Endothelial cell of umbilical vein (primary cell): ENCODE measurements at regions of chr11 and their contacts with region 1.

Region 1: GRCh38 chr11:119863236-119863635 is 134.2 kb upstream of the NECTIN1 start:
- DNase-seq: no peak
- H3K4me3 ChIP-seq: no peak overlapping the region
- H3K27ac ChIP-seq: no peak overlapping the region
- H3K4me1 ChIP-seq: no peaks in the 10 kb centered on the region
- H3K27me3 ChIP-seq: no peaks in the 10 kb centered on the region
- CTCF ChIP-seq: no peak
- POLR2A ChIP-seq: no peak

Region 2: DNA sequence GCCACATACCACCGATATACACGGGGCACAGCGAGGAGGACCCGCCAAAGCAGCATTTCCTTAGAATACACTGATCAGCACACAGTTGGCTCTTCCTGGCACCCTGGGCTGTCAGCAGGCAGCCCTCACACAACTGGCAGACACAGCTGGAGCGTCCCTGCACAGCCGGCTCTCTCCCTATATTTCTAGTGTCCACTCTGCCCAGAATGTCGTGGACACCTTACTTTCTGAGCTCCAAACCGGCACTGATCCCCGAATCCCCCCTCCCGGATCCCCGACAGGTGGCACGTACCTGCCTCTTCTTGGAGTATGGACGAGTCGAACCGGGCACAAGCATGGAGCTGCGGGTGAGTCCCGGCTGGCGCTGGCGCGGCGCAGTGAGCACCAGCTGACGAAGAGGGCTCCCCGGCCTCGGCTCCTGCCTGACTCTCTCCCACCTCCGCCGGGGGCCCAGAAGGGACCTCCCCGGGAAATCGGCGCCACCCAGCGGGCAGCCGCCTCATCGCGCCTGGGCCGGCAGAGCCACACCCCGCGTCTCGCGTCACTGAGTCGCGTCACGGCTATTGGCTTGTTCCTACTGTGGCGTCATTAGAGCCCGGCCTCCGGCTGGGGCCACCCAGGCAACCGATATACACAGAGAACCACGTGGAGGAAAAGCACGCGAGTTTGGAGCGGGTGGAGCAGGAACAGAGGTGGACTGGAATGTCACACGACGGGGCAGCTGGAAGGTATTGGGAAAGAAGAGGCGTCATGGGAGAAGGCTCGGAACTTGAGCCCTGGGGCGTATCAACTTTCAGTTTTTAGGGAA is 481.9 kb before region 1 on chr11 and contains the start of gene USP2:
- CTCF ChIA-PET with region 1: no interaction called
- POLR2A ChIA-PET with region 1: no interaction called
- dilution Hi-C with region 1: no loop called
- intact Hi-C with region 1: no loop called
- DNase-seq: peak; percentile 95
- H3K4me3 ChIP-seq: peak within 1 kb of the TSS in 2 of 3 experiments; percentile 41 to 51
- H3K27ac ChIP-seq: no peak within 1 kb of the TSS
- H3K4me1 ChIP-seq: peaks cover 10% of the 10 kb centered on the region
- H3K27me3 ChIP-seq: peaks cover 7 to 14% of the 10 kb centered on the region in 2 experiments
- CTCF ChIP-seq: peak; percentile 92
- POLR2A ChIP-seq: no peak
- total RNA-seq, gene USP2: 1.1 and 1.2 TPM in 2 replicates

Region 3: DNA sequence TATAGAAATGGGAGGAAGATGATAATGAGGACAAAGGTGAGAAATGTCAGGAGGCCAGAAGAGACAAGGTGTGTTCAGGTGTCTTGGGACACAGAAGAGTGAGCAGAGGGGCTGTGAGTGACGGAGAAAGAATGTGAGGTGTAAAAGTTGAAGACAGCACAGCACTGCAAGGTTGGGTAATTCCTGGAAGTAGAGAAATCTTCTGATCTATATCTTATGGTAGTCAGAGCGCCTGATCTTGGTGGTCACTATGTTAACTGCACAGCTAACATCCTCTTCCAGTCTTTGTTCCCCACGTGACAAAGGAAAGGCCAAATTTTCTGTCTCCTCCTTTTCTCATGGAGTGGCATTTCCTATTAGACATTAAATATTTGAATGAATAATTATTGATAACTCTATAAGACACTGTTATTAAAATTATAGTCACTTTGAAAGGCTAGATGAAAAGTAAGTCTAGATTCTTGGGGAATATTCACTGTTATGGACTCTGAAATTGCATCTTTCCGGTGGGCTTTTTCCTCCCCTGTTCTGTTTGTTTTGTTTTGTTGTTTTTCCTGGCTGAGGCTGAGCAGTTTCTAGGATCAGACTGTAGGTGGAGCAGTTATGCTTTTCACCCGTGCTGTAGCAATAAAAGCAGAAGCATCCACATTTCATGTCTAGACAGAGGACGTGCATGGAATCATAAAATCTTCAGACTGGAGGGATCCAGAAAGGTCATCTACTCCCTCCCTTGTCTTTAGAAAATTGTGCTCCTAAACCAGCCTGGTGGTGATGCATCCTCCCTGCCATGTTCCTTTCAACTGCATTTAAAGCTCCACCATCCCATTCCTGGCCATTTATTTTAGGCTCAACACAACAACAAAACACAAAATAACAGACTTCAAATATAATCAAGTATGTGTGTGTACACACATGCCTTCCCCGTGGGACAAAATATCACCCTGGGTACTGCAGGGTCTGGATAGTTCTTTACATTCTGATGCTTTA is 1455.9 kb after region 1 on chr11:
- CTCF ChIA-PET with region 1: no interaction called
- POLR2A ChIA-PET with region 1: interaction called, 15 read pairs
- dilution Hi-C with region 1: no loop called
- intact Hi-C with region 1: no loop called
- DNase-seq: peak; percentile 44
- H3K4me3 ChIP-seq: no peak overlapping the region
- H3K27ac ChIP-seq: no peak overlapping the region
- H3K4me1 ChIP-seq: no peaks in the 10 kb centered on the region
- H3K27me3 ChIP-seq: peaks cover 10 to 21% of the 10 kb centered on the region in 2 experiments
- CTCF ChIP-seq: peak; percentile 60
- POLR2A ChIP-seq: no peak